GM18951 (cell line): ENCODE measurements at regions of chr17 and their contacts with region 1.

Region 1: DNA sequence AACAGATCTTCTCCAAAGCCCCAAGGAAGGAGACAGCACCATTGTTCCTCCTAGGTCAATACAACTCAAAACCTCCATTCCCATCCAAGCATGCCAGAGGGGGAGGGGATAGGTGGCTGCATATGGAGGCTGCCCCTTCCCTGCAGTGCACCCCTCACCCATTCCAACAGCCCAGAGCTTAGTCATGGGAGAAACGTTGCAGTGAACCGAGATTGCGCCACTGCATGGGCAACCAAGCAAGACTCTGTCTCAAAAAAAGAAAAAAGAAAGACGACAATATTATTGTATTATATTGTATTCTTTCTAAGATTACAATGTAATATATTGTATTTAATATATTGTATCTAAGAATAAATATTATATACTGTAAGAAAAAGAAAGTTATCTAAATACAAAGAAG is 36.4 kb upstream of the CD300E start:
- POLR2A ChIP-seq: no peak

Region 2: GRCh38 chr17:74736513-74737298 is 76.8 kb after region 1 on chr17 and contains the start of gene RAB37:
- in situ Hi-C with region 1: loop called (anchors 10 kb)
- POLR2A ChIP-seq: no peak